ENCODE measurements at regions of chr1 and their contacts with region 1.

Region 1: GRCh38 chr1:93437976-93438605 is 9.8 kb upstream of the FNBP1L start:
- DNase-seq: no peak
- ATAC-seq: peak in 5 of 8 donors; percentile 61 to 79 (median 68)
- H3K4me3 ChIP-seq: no peak overlapping the region
- H3K27ac ChIP-seq: no peak overlapping the region
- H3K4me1 ChIP-seq: peaks cover 0 to 3% (median 0%) of the 10 kb centered on the region in 9 donors
- H3K27me3 ChIP-seq: peaks cover 0 to 6% (median 0%) of the 10 kb centered on the region in 7 donors
- CTCF ChIP-seq: peak; percentile 37 to 83 (median 71)

Region 2: GRCh38 chr1:93567255-93567918 is 129.3 kb after region 1 on chr1:
- intact Hi-C with region 1: loop called in 2 of 10 experiments (anchors 10 kb)
- DNase-seq: peak in 1 of 2 donors; percentile 31
- ATAC-seq: peak; percentile 27 to 78 (median 63)
- H3K4me3 ChIP-seq: no peak overlapping the region
- H3K27ac ChIP-seq: peak overlapping the region in 9 of 10 donors; percentile 34 to 83 (median 67)
- H3K4me1 ChIP-seq: peaks cover 9 to 36% (median 21%) of the 10 kb centered on the region in 9 donors
- H3K27me3 ChIP-seq: no peaks in the 10 kb centered on the region
- CTCF ChIP-seq: no peak

Region 3: GRCh38 chr1:93680757-93681550 is 242.9 kb after region 1 on chr1:
- intact Hi-C with region 1: loop called in 3 of 10 experiments (anchors 2 to 5 kb)
- DNase-seq: peak; percentile 82 to 86
- ATAC-seq: peak; percentile 87 to 94 (median 91)
- H3K4me3 ChIP-seq: peak overlapping the region; percentile 73 to 95 (median 86)
- H3K27ac ChIP-seq: peak overlapping the region; percentile 78 to 96 (median 90)
- H3K4me1 ChIP-seq: peaks cover 9 to 58% (median 45%) of the 10 kb centered on the region in 9 donors
- H3K27me3 ChIP-seq: peaks cover 0 to 32% (median 0%) of the 10 kb centered on the region in 7 donors
- CTCF ChIP-seq: peak; percentile 42 to 74 (median 57)

Region 4: DNA sequence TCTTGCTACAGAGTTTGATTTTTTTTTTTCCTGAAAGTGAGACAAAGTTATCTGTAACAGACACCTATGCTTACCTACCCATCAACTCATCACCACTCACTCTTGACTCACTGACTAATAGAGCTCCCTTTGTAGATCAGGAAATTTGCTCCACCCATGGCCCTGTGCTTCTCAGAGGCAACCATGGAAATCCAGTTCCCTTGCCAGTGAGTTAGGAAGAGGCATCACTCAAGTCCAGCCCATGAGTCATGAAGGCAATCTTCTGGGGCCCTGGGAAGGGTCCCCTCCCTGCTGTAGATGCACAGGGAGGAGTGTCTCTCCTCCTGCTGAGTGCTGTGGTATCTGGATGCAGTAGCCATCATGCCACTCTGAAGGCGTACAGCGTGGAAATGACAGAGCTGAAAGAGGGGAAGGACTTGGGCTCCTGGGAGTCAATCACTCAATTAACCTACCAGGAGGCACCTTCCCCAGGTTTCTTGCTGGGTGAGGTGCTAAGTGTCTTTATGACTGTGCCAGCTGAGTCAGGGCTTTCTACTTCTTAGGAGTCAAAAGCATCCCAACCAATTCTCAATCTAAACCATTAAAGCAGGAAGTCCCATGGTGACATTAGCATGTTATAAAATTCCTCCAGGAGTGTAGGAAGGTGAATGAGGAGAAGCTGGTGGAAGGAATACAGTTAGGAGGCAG is 384.8 kb after region 1 on chr1:
- intact Hi-C with region 1: loop called in 3 of 10 experiments (anchors 5 to 10 kb)
- DNase-seq: no peak
- ATAC-seq: peak in 1 of 8 donors; percentile 21
- H3K4me3 ChIP-seq: no peak overlapping the region
- H3K27ac ChIP-seq: no peak overlapping the region
- H3K4me1 ChIP-seq: peaks cover 0 to 13% (median 0%) of the 10 kb centered on the region in 9 donors
- H3K27me3 ChIP-seq: no peaks in the 10 kb centered on the region
- CTCF ChIP-seq: no peak

Measured in heart right ventricle (tissue), 16 donors.